Activated T-helper 2 cell treated with anti-CD3 and anti-CD28 coated beads, Interferon-gamma antibody, Interleukin-2, Interleukin-4, amounts not matched to agents 10 μg/mL and 5 μg/mL and 100 μg/mL, durations not matched to agents 14 hours and 24 hours and 36 hours (primary cell): ENCODE measurements at regions of chr18 and their contacts with region 1.

Region 1: GRCh38 chr18:51668101-51668500 is 470.6 kb upstream of the MEX3C start:
- DNase-seq: peak; percentile 24
- H3K4me3 Mint-ChIP-seq: no peak overlapping the region
- H3K27ac Mint-ChIP-seq: no peak overlapping the region
- H3K4me1 Mint-ChIP-seq: peaks cover 1% of the 10 kb centered on the region
- H3K27me3 Mint-ChIP-seq: no peaks in the 10 kb centered on the region

Region 2: DNA sequence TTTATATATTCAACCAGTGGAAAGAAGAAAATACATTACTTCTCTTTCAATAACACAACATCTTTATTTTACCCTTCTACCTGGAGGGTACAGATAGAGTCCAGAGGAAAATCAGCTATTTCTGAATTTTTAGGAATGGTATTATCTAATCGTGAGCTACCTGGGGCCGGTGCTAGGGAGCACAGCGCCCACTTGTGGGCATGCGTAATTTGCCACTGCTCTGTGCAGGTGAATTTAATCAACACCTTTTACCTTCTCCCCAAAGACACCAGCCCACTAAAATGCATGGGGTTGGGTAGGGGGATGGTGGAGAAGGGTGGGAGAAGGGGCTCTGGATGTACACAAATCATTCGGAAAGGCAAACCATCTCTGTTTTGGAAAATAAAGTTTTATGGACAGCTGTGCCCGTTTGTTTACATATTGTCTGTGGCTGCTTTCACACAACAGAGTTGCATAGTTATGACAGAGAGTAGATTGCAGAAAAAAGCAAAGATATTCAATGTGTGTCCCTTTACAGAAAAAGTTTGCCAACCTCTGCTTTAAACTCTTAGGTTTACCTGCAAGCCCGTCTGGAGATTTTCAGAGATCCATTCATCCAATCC is 620.4 kb after region 1 on chr18:
- intact Hi-C with region 1: loop called (anchors 1 kb)
- DNase-seq: no peak
- H3K4me3 Mint-ChIP-seq: no peak overlapping the region
- H3K27ac Mint-ChIP-seq: no peak overlapping the region
- H3K4me1 Mint-ChIP-seq: no peaks in the 10 kb centered on the region
- H3K27me3 Mint-ChIP-seq: no peaks in the 10 kb centered on the region